ENCODE measurements at regions of chr9 and their contacts with region 1.

Region 1: GRCh38 chr9:132800038-132800648 is 77.9 kb downstream of the AK8 start:
- DNase-seq: peak; percentile 69 to 73
- ATAC-seq: peak; percentile 53 to 87 (median 66)
- H3K4me3 ChIP-seq: no peak overlapping the region
- H3K27ac ChIP-seq: no peak overlapping the region
- H3K4me1 ChIP-seq: peaks cover 7 to 27% (median 13%) of the 10 kb centered on the region in 9 donors
- H3K27me3 ChIP-seq: peaks cover 0 to 30% (median 12%) of the 10 kb centered on the region in 7 donors
- CTCF ChIP-seq: peak; percentile 78 to 92 (median 89)

Region 2: GRCh38 chr9:132406554-132407122 is 393.5 kb before region 1 on chr9 and contains the start of gene TTF1:
- intact Hi-C with region 1: loop called in 8 of 10 experiments (anchors 2 to 10 kb)
- DNase-seq: peak; percentile 91 to 93
- ATAC-seq: peak; percentile 64 to 92 (median 84)
- H3K4me3 ChIP-seq: peak within 1 kb of the TSS; percentile 67 to 96 (median 82)
- H3K27ac ChIP-seq: peak within 1 kb of the TSS; percentile 47 to 83 (median 76)
- H3K4me1 ChIP-seq: peaks cover 15 to 69% (median 57%) of the 10 kb centered on the region in 9 donors
- H3K27me3 ChIP-seq: peaks cover 0 to 26% (median 19%) of the 10 kb centered on the region in 7 donors
- CTCF ChIP-seq: no peak
- total RNA-seq, gene TTF1: 12.0 to 19.1 (median 15.8) TPM

Region 3: GRCh38 chr9:132498531-132499210 is 301.5 kb before region 1 on chr9:
- intact Hi-C with region 1: loop called in 1 of 10 experiments (anchors 2 kb)
- DNase-seq: no peak
- ATAC-seq: no peak
- H3K4me3 ChIP-seq: no peak overlapping the region
- H3K27ac ChIP-seq: no peak overlapping the region
- H3K4me1 ChIP-seq: no peaks in the 10 kb centered on the region
- H3K27me3 ChIP-seq: peaks cover 0 to 18% (median 15%) of the 10 kb centered on the region in 7 donors
- CTCF ChIP-seq: no peak

Region 4: DNA sequence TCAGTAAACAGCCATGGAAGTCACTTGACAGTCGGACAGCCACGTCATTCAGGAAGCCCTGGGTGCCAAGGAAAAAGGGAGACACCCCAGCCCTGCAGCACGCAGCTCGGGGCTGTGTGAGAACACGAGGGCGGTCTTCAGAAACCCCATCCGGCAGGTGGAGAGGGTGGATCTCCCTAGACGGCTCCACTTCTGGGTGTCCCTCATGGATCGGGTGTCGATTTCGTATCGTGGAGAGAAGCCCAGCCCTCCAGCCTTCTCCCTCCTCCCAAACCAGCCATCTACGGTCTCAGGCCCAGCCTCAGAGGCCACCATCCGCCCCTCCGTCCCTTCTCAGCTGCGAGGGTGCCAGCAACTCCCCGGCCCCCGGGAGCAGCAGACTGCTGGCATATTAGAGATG is 283.2 kb before region 1 on chr9:
- intact Hi-C with region 1: loop called in 1 of 10 experiments (anchors 5 kb)
- DNase-seq: no peak
- ATAC-seq: no peak
- H3K4me3 ChIP-seq: no peak overlapping the region
- H3K27ac ChIP-seq: no peak overlapping the region
- H3K4me1 ChIP-seq: no peaks in the 10 kb centered on the region
- H3K27me3 ChIP-seq: peaks cover 0 to 35% (median 20%) of the 10 kb centered on the region in 7 donors
- CTCF ChIP-seq: no peak

Region 5: DNA sequence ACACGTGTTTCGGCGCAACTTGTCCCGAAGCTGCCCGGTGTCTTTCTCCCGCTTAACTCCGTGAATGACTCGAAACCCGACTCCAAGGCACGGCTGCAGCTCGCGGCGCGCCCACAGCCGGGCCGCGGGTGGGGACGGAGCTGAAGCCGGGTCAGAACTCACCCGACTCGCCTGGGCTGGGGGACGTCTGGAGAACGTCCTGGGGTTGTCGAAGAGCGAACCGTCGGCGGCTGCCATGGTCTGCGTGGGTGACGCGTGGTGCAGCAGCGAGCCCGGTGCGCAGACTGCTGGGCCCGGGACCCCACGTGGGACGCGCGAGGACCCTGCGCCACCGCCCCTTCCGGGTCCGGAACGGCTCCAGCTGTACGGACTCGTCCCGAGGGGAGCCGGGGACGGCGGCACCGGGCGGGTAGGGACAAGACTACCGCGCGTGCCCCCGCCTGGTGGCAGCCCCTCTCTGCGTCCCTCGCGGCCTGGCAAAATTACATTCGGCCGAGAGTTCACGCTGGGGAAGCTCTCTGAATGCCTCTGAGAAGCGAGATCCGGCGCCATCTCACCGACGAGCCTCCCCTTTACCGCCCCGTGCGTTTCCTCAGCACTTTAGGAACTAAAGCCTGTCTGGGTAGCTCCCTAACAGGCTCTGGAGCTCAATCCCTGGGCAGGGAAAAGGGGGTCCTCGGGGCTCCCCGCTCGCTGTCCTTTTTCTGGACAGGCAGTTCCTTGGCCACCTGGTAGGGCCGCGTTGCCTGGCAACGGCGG is 130.3 kb before region 1 on chr9 and contains the start of gene DDX31:
- intact Hi-C with region 1: loop called in 3 of 10 experiments (anchors 5 to 10 kb)
- DNase-seq: peak; percentile 86 to 88
- ATAC-seq: peak; percentile 97 to 99 (median 98)
- H3K4me3 ChIP-seq: peak within 1 kb of the TSS; percentile 71 to 98 (median 86)
- H3K27ac ChIP-seq: peak within 1 kb of the TSS; percentile 93 to 99 (median 98)
- H3K4me1 ChIP-seq: peaks cover 6 to 48% (median 30%) of the 10 kb centered on the region in 9 donors
- H3K27me3 ChIP-seq: no peaks in the 10 kb centered on the region
- CTCF ChIP-seq: peak in 1 of 9 donors; percentile 22
- total RNA-seq, gene DDX31: 4.2 to 6.4 (median 5.1) TPM

Region 6: GRCh38 chr9:132973713-132974112 is 173.6 kb after region 1 on chr9:
- intact Hi-C with region 1: loop called in 3 of 10 experiments (anchors 5 to 10 kb)
- DNase-seq: no peak
- ATAC-seq: no peak
- H3K4me3 ChIP-seq: no peak overlapping the region
- H3K27ac ChIP-seq: no peak overlapping the region
- H3K4me1 ChIP-seq: peaks cover 0 to 12% (median 3%) of the 10 kb centered on the region in 9 donors
- H3K27me3 ChIP-seq: peaks cover 3 to 62% (median 33%) of the 10 kb centered on the region in 7 donors
- CTCF ChIP-seq: no peak